ENCODE measurements at regions of chr7 and their contacts with region 1.

Region 1: GRCh38 chr7:107854989-107855388 is 36.0 kb upstream of the DLD start:
- DNase-seq: no peak
- ATAC-seq: no peak
- H3K4me3 ChIP-seq: no peak overlapping the region
- H3K27ac ChIP-seq: no peak overlapping the region
- H3K4me1 ChIP-seq: peaks cover 0 to 9% (median 0%) of the 10 kb centered on the region in 9 donors
- H3K27me3 ChIP-seq: no peaks in the 10 kb centered on the region
- CTCF ChIP-seq: no peak

Region 2: GRCh38 chr7:106763717-106764116 is 1091.3 kb before region 1 on chr7:
- intact Hi-C with region 1: loop called in 1 of 10 experiments (anchors 5 kb)
- DNase-seq: no peak
- ATAC-seq: no peak
- H3K4me3 ChIP-seq: no peak overlapping the region
- H3K27ac ChIP-seq: no peak overlapping the region
- H3K4me1 ChIP-seq: peaks cover 0 to 14% (median 0%) of the 10 kb centered on the region in 9 donors
- H3K27me3 ChIP-seq: no peaks in the 10 kb centered on the region
- CTCF ChIP-seq: no peak

Region 3: GRCh38 chr7:107958764-107959526 is 104.0 kb after region 1 on chr7:
- intact Hi-C with region 1: no loop called
- DNase-seq: no peak
- ATAC-seq: peak in 5 of 8 donors; percentile 18 to 62 (median 32)
- H3K4me3 ChIP-seq: no peak overlapping the region
- H3K27ac ChIP-seq: peak overlapping the region in 4 of 10 donors; percentile 19 to 43 (median 32)
- H3K4me1 ChIP-seq: peaks cover 0 to 42% (median 26%) of the 10 kb centered on the region in 9 donors
- H3K27me3 ChIP-seq: no peaks in the 10 kb centered on the region
- CTCF ChIP-seq: no peak

Measured in heart right ventricle (tissue), 16 donors.